HepG2 (cell line): ENCODE measurements at regions of chr20 and their contacts with region 1.

Region 1: GRCh38 chr20:19692685-19693119 is 65.4 kb upstream of the RIN2 start:
- DNase-seq: peak; percentile 37
- ATAC-seq: peak; percentile 63
- H3K4me3 ChIP-seq: no peak overlapping the region
- H3K27ac ChIP-seq: no peak overlapping the region
- H3K4me1 ChIP-seq: no peaks in the 10 kb centered on the region
- H3K27me3 ChIP-seq: 0 out of 5 replicates have a peak, but pooled peaks cover 0 to 13% of the 10 kb centered on the region in 2 experiments
- CTCF ChIP-seq: peak; percentile 92
- EP300 ChIP-seq: no peak
- POLR2A ChIP-seq: no peak
- RAD21 ChIP-seq: peak; percentile 68; the same call in 1 of the 2 replicates

Region 2: GRCh38 chr20:19241440-19241839 is 451.3 kb before region 1 on chr20:
- CTCF ChIA-PET with region 1: no interaction called
- POLR2A ChIA-PET with region 1: no interaction called
- in situ Hi-C with region 1: no loop called
- intact Hi-C with region 1: no loop called
- DNase-seq: no peak
- ATAC-seq: no peak
- H3K4me3 ChIP-seq: no peak overlapping the region
- H3K27ac ChIP-seq: no peak overlapping the region
- H3K4me1 ChIP-seq: no peaks in the 10 kb centered on the region
- H3K27me3 ChIP-seq: peaks cover 0 to 12% of the 10 kb centered on the region in 2 experiments; a peak in 2 of 5 replicates
- CTCF ChIP-seq: no peak
- EP300 ChIP-seq: no peak
- POLR2A ChIP-seq: no peak
- RAD21 ChIP-seq: no peak

Region 3: GRCh38 chr20:19757487-19758132 is 64.9 kb after region 1 on chr20:
- CTCF ChIA-PET with region 1: no interaction called
- POLR2A ChIA-PET with region 1: no interaction called
- in situ Hi-C with region 1: loop called (anchors 5 kb)
- intact Hi-C with region 1: loop called (anchors 2 kb)
- DNase-seq: peak; percentile 86
- ATAC-seq: peak; percentile 82
- H3K4me3 ChIP-seq: peak overlapping the region; percentile 61 to 85 (median 70)
- H3K27ac ChIP-seq: peak overlapping the region; percentile 61
- H3K4me1 ChIP-seq: peaks cover 37% of the 10 kb centered on the region
- H3K27me3 ChIP-seq: peaks cover 0 to 24% of the 10 kb centered on the region in 2 experiments; a peak in 3 of 5 replicates
- CTCF ChIP-seq: peak; percentile 20; the same call in 1 of the 2 replicates
- EP300 ChIP-seq: no peak; a peak in 1 of 4 replicates
- POLR2A ChIP-seq: peak in 1 of 2 experiments; percentile 13; a peak in 1 of 4 replicates
- RAD21 ChIP-seq: no peak

Region 4: GRCh38 chr20:19784511-19785172 is 91.9 kb after region 1 on chr20:
- CTCF ChIA-PET with region 1: interaction called, 3 read pairs
- POLR2A ChIA-PET with region 1: no interaction called
- in situ Hi-C with region 1: no loop called
- intact Hi-C with region 1: loop called (anchors 1 kb)
- DNase-seq: peak; percentile 75
- ATAC-seq: peak; percentile 91
- H3K4me3 ChIP-seq: 0 out of 6 replicates have a peak overlapping the region, but pooled peaks of 1 of the 3 experiments have one; percentile 2
- H3K27ac ChIP-seq: no peak overlapping the region
- H3K4me1 ChIP-seq: peaks cover 14% of the 10 kb centered on the region
- H3K27me3 ChIP-seq: no peaks in the 10 kb centered on the region
- CTCF ChIP-seq: peak; percentile 88
- EP300 ChIP-seq: no peak
- POLR2A ChIP-seq: no peak
- RAD21 ChIP-seq: peak; percentile 72

Region 5: GRCh38 chr20:19794941-19795340 is 102.2 kb after region 1 on chr20:
- CTCF ChIA-PET with region 1: no interaction called
- POLR2A ChIA-PET with region 1: no interaction called
- in situ Hi-C with region 1: loop called (anchors 5 kb)
- intact Hi-C with region 1: no loop called
- DNase-seq: no peak
- ATAC-seq: no peak
- H3K4me3 ChIP-seq: no peak overlapping the region
- H3K27ac ChIP-seq: no peak overlapping the region
- H3K4me1 ChIP-seq: no peaks in the 10 kb centered on the region
- H3K27me3 ChIP-seq: no peaks in the 10 kb centered on the region
- CTCF ChIP-seq: no peak
- EP300 ChIP-seq: no peak
- POLR2A ChIP-seq: no peak
- RAD21 ChIP-seq: no peak

Region 6: GRCh38 chr20:19802492-19803158 is 109.9 kb after region 1 on chr20:
- CTCF ChIA-PET with region 1: interaction called, 48 read pairs
- POLR2A ChIA-PET with region 1: no interaction called
- in situ Hi-C with region 1: loop called (anchors 5 kb)
- intact Hi-C with region 1: loop called (anchors 1 kb)
- DNase-seq: peak; percentile 75
- ATAC-seq: peak; percentile 100
- H3K4me3 ChIP-seq: no peak overlapping the region
- H3K27ac ChIP-seq: no peak overlapping the region
- H3K4me1 ChIP-seq: no peaks in the 10 kb centered on the region
- H3K27me3 ChIP-seq: no peaks in the 10 kb centered on the region
- CTCF ChIP-seq: peak; percentile 72
- EP300 ChIP-seq: no peak
- POLR2A ChIP-seq: no peak
- RAD21 ChIP-seq: peak; percentile 51

Region 7: DNA sequence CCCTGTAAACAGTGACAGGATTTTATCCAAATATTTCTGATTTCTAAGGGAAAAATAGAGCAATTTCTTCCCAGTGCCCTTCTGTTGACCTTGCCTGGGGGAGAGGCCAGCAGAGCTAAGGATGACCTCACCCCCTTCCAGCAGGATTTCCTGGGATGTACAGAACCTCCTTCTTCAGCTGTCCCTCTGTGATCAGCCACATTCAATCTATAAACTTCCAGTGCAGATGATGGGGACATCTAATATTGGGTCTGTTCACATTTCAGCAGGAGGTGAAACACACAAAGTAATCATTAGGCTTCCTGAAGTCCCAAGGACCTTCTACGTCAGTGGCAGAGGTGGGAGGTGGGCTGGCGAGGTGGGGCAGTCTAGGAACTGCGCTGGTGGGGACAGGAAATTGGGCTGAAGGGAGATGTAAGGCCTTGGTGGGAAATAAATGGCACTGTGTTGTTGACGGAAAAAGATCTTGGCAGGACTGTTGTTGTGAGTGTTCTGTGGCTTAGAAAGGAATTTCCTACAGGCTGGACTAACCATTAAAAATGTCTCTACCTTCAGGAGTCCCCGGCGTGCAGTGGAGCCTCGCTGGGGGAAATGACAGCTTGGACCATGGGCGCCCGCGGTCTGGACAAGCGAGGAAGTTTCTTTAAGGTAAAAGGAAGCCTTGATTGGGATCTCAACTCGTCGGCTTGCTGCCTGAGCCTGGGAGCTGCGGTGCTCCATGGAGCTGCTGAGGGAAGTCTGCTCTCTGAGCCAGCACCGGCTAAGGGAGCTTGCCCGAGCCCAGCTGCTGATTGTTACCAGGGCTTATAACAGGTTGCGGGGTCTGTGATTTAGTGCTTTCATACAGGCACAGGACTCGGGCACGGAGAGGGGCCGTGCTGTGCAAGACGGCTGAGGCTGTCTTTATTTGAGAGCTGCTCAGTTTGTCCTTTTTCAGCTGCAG is 196.6 kb after region 1 on chr20:
- CTCF ChIA-PET with region 1: no interaction called
- POLR2A ChIA-PET with region 1: no interaction called
- in situ Hi-C with region 1: no loop called
- intact Hi-C with region 1: loop called (anchors 2 kb)
- DNase-seq: no peak
- ATAC-seq: no peak
- H3K4me3 ChIP-seq: no peak overlapping the region; a peak in 2 of 6 replicates
- H3K27ac ChIP-seq: no peak overlapping the region
- H3K4me1 ChIP-seq: peaks cover 50% of the 10 kb centered on the region
- H3K27me3 ChIP-seq: peaks cover 0 to 17% of the 10 kb centered on the region in 2 experiments; a peak in 2 of 5 replicates
- CTCF ChIP-seq: no peak
- EP300 ChIP-seq: no peak
- POLR2A ChIP-seq: no peak
- RAD21 ChIP-seq: no peak

Region 8: GRCh38 chr20:19995220-19995863 is 302.6 kb after region 1 on chr20:
- CTCF ChIA-PET with region 1: interaction called, 12 read pairs
- POLR2A ChIA-PET with region 1: no interaction called
- in situ Hi-C with region 1: no loop called
- intact Hi-C with region 1: loop called (anchors 1 kb)
- DNase-seq: peak; percentile 63
- ATAC-seq: peak; percentile 55; the same call in 2 of the 3 replicates
- H3K4me3 ChIP-seq: no peak overlapping the region
- H3K27ac ChIP-seq: no peak overlapping the region
- H3K4me1 ChIP-seq: peaks cover 38% of the 10 kb centered on the region
- H3K27me3 ChIP-seq: no peaks in the 10 kb centered on the region
- CTCF ChIP-seq: peak; percentile 85
- EP300 ChIP-seq: no peak
- POLR2A ChIP-seq: no peak
- RAD21 ChIP-seq: peak; percentile 78